ENCODE measurements at regions of chr6 and their contacts with region 1.

Region 1: GRCh38 chr6:13538084-13538483 is 36.3 kb upstream of the SIRT5 start:
- DNase-seq: no peak
- H3K4me3 ChIP-seq: no peak overlapping the region
- H3K27me3 ChIP-seq: 0 out of 2 replicates have a peak, but pooled peaks cover 2% of the 10 kb centered on the region
- CTCF ChIP-seq: peak; percentile 47

Region 2: DNA sequence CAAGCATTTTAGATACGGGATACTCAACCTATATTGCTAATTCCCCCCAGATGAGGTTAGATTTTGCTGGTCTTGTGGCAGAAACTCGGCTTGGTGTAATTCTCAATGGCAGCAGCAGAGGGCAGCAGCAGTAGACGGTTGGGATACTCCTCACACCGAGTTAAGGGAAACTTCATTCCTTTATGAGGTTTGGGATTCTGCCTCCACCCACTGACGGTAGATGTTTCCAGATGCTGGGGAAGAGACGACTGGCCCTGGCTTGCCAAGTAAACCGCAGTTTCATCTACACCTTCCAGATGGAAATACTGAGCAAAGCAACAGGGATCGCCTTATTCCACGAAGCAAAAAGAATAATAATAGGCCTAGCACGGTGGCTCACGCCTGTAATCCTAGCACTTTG is 201.5 kb before region 1 on chr6:
- CTCF ChIA-PET with region 1: interaction called, 24 read pairs
- POLR2A ChIA-PET with region 1: no interaction called
- DNase-seq: peak; percentile 85
- H3K4me3 ChIP-seq: no peak overlapping the region
- H3K27me3 ChIP-seq: peaks cover 2% of the 10 kb centered on the region
- CTCF ChIP-seq: peak; percentile 86

Region 3: DNA sequence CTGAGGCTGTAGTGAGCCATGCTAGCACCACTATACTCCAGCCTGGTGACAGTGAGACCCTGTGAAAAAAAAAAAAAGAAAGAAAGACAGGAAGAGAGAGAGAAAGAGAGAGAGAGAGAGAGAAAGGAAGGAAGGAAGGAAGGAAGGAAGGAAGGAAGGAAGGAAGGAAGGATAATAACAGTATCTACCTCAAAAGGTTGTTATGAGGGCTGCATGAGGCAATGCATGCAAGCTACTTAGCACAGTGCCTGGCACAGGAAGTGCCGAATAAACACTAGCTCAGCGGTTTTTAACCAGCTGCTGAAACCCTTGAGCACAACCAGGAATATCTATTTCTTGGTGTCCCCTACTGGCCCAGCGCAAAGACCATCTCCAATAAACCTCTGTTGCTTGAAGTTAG is 147.4 kb before region 1 on chr6:
- CTCF ChIA-PET with region 1: no interaction called
- POLR2A ChIA-PET with region 1: no interaction called
- DNase-seq: no peak
- H3K4me3 ChIP-seq: no peak overlapping the region
- H3K27me3 ChIP-seq: no peaks in the 10 kb centered on the region
- CTCF ChIP-seq: no peak

Region 4: DNA sequence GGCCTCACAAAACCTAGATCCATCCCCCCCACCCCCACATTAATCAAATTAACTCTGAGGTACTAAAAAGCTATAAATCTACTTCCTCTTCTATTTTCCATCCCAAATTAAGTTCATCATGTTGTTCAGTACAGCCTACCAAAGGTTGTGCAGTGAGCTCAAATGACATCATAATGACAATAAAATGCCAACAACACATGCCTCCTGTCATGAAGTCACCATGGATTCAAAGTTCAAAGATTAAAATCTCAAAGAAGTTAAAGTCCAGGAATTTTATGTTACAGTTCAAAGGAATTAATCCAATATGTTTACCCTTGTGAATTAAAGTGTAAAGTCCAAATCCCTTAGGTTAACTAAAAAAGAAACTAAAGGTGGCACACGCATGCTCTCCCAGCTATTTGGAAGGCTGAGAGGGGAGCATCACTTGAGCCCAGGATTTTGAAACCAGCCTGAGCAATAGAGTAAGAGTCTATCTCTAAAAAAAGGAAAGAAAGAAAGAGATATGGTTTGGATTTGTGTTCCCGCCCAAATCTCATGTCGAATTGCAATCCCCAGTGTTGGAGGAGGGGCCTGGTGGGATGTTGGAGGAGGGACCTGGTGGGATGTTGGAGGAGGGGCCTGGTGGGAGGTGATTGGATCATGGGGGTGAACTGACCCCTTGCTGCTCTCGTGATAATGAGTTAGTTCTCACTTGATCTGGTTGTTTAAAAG is 10.6 kb after region 1 on chr6:
- CTCF ChIA-PET with region 1: interaction called, 13 read pairs
- POLR2A ChIA-PET with region 1: no interaction called
- DNase-seq: no peak
- H3K4me3 ChIP-seq: no peak overlapping the region
- H3K27me3 ChIP-seq: no peaks in the 10 kb centered on the region
- CTCF ChIP-seq: no peak